IMR-90 (cell line): ENCODE measurements at regions of chr7 and their contacts with region 1.

Region 1: GRCh38 chr7:157336383-157337315 is at the start of gene DNAJB6:
- DNase-seq: peak; percentile 90
- ATAC-seq: peak; percentile 85
- H3K4me3 ChIP-seq: peak within 1 kb of the TSS; percentile 96
- H3K27ac ChIP-seq: peak within 1 kb of the TSS; percentile 96
- H3K4me1 ChIP-seq: peaks cover 10% of the 10 kb centered on the region
- H3K27me3 ChIP-seq: no peaks in the 10 kb centered on the region
- CTCF ChIP-seq: no peak
- POLR2A ChIP-seq: peak; percentile 85
- RAD21 ChIP-seq: no peak
- total RNA-seq, gene DNAJB6: 93.4 and 155 TPM in 2 replicates

Region 2: GRCh38 chr7:157228864-157229422 is 107.7 kb before region 1 on chr7:
- CTCF ChIA-PET with region 1: interaction called, 3 read pairs
- POLR2A ChIA-PET with region 1: no interaction called
- dilution Hi-C with region 1: no loop called
- in situ Hi-C with region 1: no loop called
- intact Hi-C with region 1: loop called (anchors 1 kb)
- DNase-seq: peak; percentile 31
- ATAC-seq: peak; percentile 74
- H3K4me3 ChIP-seq: no peak overlapping the region
- H3K27ac ChIP-seq: no peak overlapping the region
- H3K4me1 ChIP-seq: no peaks in the 10 kb centered on the region
- H3K27me3 ChIP-seq: no peaks in the 10 kb centered on the region
- CTCF ChIP-seq: peak; percentile 45
- POLR2A ChIP-seq: no peak
- RAD21 ChIP-seq: peak; percentile 51

Region 3: DNA sequence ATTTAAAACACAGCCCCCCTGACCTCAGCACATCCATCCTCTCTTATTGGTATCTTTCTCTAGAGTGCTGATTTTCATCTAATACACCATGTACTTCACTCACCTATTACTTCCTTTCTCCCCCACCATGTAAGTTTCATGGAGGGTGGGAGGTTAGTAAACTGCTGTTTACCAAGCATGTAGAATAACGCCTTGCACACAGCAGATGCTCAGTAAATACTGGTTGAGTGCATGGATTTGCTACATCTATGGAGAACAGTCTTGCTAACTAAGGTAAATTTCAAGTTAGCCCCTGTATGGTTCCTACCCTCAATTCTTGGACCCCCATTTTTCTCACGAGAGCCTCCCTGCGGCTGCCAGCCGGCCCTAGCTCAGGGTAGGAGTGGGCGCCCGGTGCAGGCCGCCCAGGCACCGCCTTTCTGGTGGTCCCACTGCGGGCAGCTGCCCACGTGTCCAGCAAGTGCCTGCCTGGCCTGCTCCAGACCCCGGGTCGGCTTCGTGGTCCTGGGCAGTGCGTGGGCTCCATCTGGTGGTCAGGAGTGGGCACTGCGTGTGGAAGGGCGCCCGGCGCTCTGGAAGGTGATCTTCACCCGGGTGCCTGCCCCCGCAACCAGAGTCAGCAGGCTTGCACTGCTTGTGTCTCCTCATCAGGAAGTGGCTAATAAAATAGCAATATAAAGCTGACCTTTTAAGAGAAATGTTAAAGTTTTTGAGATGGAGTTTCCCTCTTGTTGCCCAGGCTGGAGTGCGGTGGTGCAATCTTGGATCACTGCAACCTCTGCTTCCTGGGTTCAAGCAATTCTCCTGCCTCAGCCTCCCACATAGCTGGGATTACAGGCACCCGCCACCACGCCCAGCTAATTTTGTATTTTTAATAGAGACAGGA is 63.2 kb before region 1 on chr7:
- CTCF ChIA-PET with region 1: interaction called, 4 read pairs
- POLR2A ChIA-PET with region 1: no interaction called
- dilution Hi-C with region 1: no loop called
- in situ Hi-C with region 1: loop called (anchors 5 kb)
- intact Hi-C with region 1: loop called (anchors 1 kb)
- DNase-seq: peak; percentile 74
- ATAC-seq: peak; percentile 73
- H3K4me3 ChIP-seq: no peak overlapping the region
- H3K27ac ChIP-seq: peak overlapping the region; percentile 93
- H3K4me1 ChIP-seq: peaks cover 22% of the 10 kb centered on the region
- H3K27me3 ChIP-seq: no peaks in the 10 kb centered on the region
- CTCF ChIP-seq: peak; percentile 96
- POLR2A ChIP-seq: no peak
- RAD21 ChIP-seq: peak; percentile 91

Region 4: GRCh38 chr7:157309990-157310668 is 26.5 kb before region 1 on chr7:
- CTCF ChIA-PET with region 1: no interaction called
- POLR2A ChIA-PET with region 1: no interaction called
- dilution Hi-C with region 1: no loop called
- in situ Hi-C with region 1: no loop called
- intact Hi-C with region 1: loop called (anchors 1 kb)
- DNase-seq: peak; percentile 96
- ATAC-seq: peak; percentile 94
- H3K4me3 ChIP-seq: no peak overlapping the region
- H3K27ac ChIP-seq: peak overlapping the region; percentile 96
- H3K4me1 ChIP-seq: peaks cover 16% of the 10 kb centered on the region
- H3K27me3 ChIP-seq: no peaks in the 10 kb centered on the region
- CTCF ChIP-seq: no peak
- POLR2A ChIP-seq: no peak
- RAD21 ChIP-seq: no peak

Region 5: GRCh38 chr7:157394246-157395191 is 57.9 kb after region 1 on chr7:
- CTCF ChIA-PET with region 1: no interaction called
- POLR2A ChIA-PET with region 1: no interaction called
- dilution Hi-C with region 1: no loop called
- in situ Hi-C with region 1: no loop called
- intact Hi-C with region 1: no loop called
- DNase-seq: peak; percentile 78
- ATAC-seq: no peak
- H3K4me3 ChIP-seq: no peak overlapping the region
- H3K27ac ChIP-seq: no peak overlapping the region
- H3K4me1 ChIP-seq: peaks cover 16% of the 10 kb centered on the region
- H3K27me3 ChIP-seq: no peaks in the 10 kb centered on the region
- CTCF ChIP-seq: no peak
- POLR2A ChIP-seq: no peak
- RAD21 ChIP-seq: no peak